CD4-positive, alpha-beta memory T cell (primary cell): ENCODE measurements at regions of chr6 and their contacts with region 1.

Region 1: DNA sequence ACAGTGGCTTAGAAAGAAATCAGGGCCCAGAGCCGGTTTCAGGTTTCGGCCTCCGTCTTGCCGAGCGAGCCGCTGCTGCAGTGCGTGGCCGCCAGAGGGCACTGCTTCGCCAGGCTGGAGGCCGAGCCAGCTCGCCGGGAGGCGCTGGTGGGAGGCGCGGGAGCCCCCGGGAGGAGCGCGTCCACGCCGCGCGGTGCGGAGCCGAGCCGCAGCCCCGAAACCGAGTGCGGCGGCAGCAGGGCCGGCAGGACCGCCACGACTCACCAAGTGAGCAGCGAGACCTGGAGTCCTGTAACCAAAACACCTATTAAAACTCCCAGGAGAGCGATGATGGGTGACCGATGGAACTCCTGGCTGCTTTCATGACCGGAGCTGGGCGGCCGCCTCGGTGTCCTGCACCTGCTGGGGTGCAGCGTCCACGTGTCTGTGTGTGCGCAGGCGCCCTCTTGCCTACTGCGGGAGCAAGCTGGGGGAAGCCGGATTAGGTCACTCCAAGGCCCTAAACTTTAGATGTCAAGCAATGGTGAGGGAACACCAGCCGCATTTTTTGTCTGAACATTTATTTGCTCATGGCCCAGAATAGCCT is 186.9 kb upstream of the UST start:
- DNase-seq: peak; percentile 48 to 73 (median 65)
- H3K4me3 ChIP-seq: peak overlapping the region in 1 of 2 donors; percentile 56
- H3K4me3 Mint-ChIP-seq: peak overlapping the region in 4 of 8 donors; percentile 12 to 33 (median 20)
- H3K27ac ChIP-seq: no peak overlapping the region
- H3K27ac Mint-ChIP-seq: no peak overlapping the region
- H3K4me1 ChIP-seq: peaks cover 8% of the 10 kb centered on the region
- H3K4me1 Mint-ChIP-seq: peaks cover 7 to 10% (median 8%) of the 10 kb centered on the region in 4 donors
- H3K27me3 ChIP-seq: no peaks in the 10 kb centered on the region
- H3K27me3 Mint-ChIP-seq: peaks cover 3 to 5% of the 10 kb centered on the region in 2 donors

Region 2: GRCh38 chr6:148440877-148441453 is 119.0 kb before region 1 on chr6:
- CTCF ChIA-PET with region 1: no interaction called
- POLR2A ChIA-PET with region 1: no interaction called
- intact Hi-C with region 1: no loop called
- DNase-seq: no peak
- H3K4me3 ChIP-seq: no peak overlapping the region
- H3K4me3 Mint-ChIP-seq: no peak overlapping the region
- H3K27ac ChIP-seq: no peak overlapping the region
- H3K27ac Mint-ChIP-seq: no peak overlapping the region
- H3K4me1 ChIP-seq: no peaks in the 10 kb centered on the region
- H3K4me1 Mint-ChIP-seq: peaks cover 4 to 7% (median 6%) of the 10 kb centered on the region in 4 donors
- H3K27me3 ChIP-seq: no peaks in the 10 kb centered on the region
- H3K27me3 Mint-ChIP-seq: peaks cover 4 to 6% of the 10 kb centered on the region in 2 donors

Region 3: GRCh38 chr6:148570451-148570850 is 10.5 kb after region 1 on chr6:
- CTCF ChIA-PET with region 1: interaction called, 14 read pairs
- POLR2A ChIA-PET with region 1: no interaction called
- intact Hi-C with region 1: no loop called
- DNase-seq: no peak
- H3K4me3 ChIP-seq: no peak overlapping the region
- H3K4me3 Mint-ChIP-seq: no peak overlapping the region
- H3K27ac ChIP-seq: no peak overlapping the region
- H3K27ac Mint-ChIP-seq: no peak overlapping the region
- H3K4me1 ChIP-seq: no peaks in the 10 kb centered on the region
- H3K4me1 Mint-ChIP-seq: peaks cover 9 to 18% (median 12%) of the 10 kb centered on the region in 4 donors
- H3K27me3 ChIP-seq: no peaks in the 10 kb centered on the region
- H3K27me3 Mint-ChIP-seq: peaks cover 10 to 11% of the 10 kb centered on the region in 2 donors

Region 4: DNA sequence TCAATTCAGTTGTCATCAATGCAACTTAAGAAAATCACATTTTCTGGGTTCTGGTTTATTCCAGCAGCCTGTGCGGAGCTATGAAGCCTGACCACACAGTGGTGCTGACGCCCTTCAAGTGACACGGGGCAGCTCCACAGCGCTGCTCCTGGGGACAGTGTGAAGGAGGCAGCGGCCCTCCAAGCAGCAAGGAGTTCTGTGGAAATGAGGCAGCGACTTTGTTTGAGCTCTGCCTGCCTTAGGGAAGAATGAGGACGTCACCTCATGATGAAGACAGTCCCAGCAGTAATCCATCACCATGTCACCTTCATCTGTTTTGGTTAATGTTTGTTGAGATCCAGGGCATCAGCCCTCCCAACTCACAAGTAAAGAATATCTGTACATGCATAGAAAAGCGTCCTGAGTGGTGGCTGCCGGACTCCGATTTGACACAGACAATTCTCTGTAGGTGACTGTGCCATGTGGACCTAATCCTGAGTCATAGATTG is 18.3 kb after region 1 on chr6:
- CTCF ChIA-PET with region 1: interaction called, 16 read pairs
- POLR2A ChIA-PET with region 1: no interaction called
- intact Hi-C with region 1: no loop called
- DNase-seq: peak in 4 of 5 donors; percentile 28 to 46 (median 41)
- H3K4me3 ChIP-seq: no peak overlapping the region
- H3K4me3 Mint-ChIP-seq: no peak overlapping the region
- H3K27ac ChIP-seq: no peak overlapping the region
- H3K27ac Mint-ChIP-seq: peak overlapping the region in 1 of 7 donors; percentile 72
- H3K4me1 ChIP-seq: no peaks in the 10 kb centered on the region
- H3K4me1 Mint-ChIP-seq: peaks cover 3 to 7% (median 5%) of the 10 kb centered on the region in 4 donors
- H3K27me3 ChIP-seq: no peaks in the 10 kb centered on the region
- H3K27me3 Mint-ChIP-seq: peaks cover 8 to 11% of the 10 kb centered on the region in 2 donors

Region 5: GRCh38 chr6:148583631-148584030 is 23.7 kb after region 1 on chr6:
- CTCF ChIA-PET with region 1: interaction called, 16 read pairs
- POLR2A ChIA-PET with region 1: no interaction called
- intact Hi-C with region 1: no loop called
- DNase-seq: no peak
- H3K4me3 ChIP-seq: no peak overlapping the region
- H3K4me3 Mint-ChIP-seq: no peak overlapping the region
- H3K27ac ChIP-seq: no peak overlapping the region
- H3K27ac Mint-ChIP-seq: no peak overlapping the region
- H3K4me1 ChIP-seq: no peaks in the 10 kb centered on the region
- H3K4me1 Mint-ChIP-seq: no peaks in the 10 kb centered on the region
- H3K27me3 ChIP-seq: no peaks in the 10 kb centered on the region
- H3K27me3 Mint-ChIP-seq: peaks cover 23 to 27% of the 10 kb centered on the region in 2 donors

Region 6: GRCh38 chr6:148776321-148777308 is 216.7 kb after region 1 on chr6:
- CTCF ChIA-PET with region 1: interaction called, 10 read pairs
- POLR2A ChIA-PET with region 1: no interaction called
- intact Hi-C with region 1: no loop called
- DNase-seq: no peak
- H3K4me3 ChIP-seq: no peak overlapping the region
- H3K4me3 Mint-ChIP-seq: peak overlapping the region in 3 of 8 donors; percentile 49 to 51 (median 49)
- H3K27ac ChIP-seq: no peak overlapping the region
- H3K27ac Mint-ChIP-seq: peak overlapping the region in 4 of 7 donors; percentile 5 to 72 (median 10)
- H3K4me1 ChIP-seq: peaks cover 27% of the 10 kb centered on the region
- H3K4me1 Mint-ChIP-seq: peaks cover 20 to 40% (median 35%) of the 10 kb centered on the region in 4 donors
- H3K27me3 ChIP-seq: no peaks in the 10 kb centered on the region
- H3K27me3 Mint-ChIP-seq: no peaks in the 10 kb centered on the region

Region 7: DNA sequence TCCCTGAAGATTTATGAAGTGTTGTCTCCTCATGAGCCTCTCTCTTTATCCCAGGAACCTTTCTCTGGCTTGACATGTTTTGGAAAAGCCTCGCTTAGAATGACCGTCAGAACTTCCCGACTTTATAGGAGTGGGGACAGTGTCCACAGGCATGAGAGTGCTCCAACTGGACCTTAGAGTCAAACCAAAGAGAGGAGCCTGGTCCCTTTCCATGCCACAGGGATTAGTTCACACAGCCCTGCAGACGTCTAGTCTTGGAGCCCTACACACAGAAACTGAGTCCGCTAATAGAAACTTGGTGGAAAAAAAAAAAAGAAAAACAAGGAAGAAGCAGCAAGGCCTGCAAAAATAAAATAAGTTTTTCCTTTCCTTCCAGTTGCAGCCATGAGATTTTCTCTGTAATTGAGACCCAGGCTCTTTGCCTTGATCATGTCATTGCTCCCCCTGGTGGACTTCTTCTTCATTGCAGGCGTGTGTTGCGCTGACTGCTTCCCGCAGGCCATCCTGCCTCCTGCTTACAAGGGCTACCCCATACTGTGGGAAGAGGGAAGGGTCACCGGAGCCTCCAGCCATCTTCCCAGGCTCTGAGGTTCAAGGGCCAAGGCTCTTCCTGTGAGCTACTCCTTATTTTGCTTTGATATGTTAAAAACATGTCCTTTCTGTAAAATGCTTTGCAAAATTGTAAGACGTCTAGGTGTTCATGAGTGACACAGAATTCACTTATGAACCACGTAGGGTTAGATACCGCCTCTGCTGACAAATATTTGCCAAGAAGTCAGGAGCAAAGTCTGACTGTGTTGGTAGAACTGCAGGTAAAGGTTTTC is 387.9 kb after region 1 on chr6:
- CTCF ChIA-PET with region 1: interaction called, 12 read pairs
- POLR2A ChIA-PET with region 1: no interaction called
- intact Hi-C with region 1: loop called (anchors 1 kb)
- DNase-seq: peak; percentile 70 to 82 (median 79)
- H3K4me3 ChIP-seq: no peak overlapping the region
- H3K4me3 Mint-ChIP-seq: no peak overlapping the region
- H3K27ac ChIP-seq: no peak overlapping the region
- H3K27ac Mint-ChIP-seq: no peak overlapping the region
- H3K4me1 ChIP-seq: no peaks in the 10 kb centered on the region
- H3K4me1 Mint-ChIP-seq: peaks cover 0 to 5% (median 4%) of the 10 kb centered on the region in 4 donors
- H3K27me3 ChIP-seq: no peaks in the 10 kb centered on the region
- H3K27me3 Mint-ChIP-seq: no peaks in the 10 kb centered on the region